Body of pancreas (tissue), 4 donors: ENCODE measurements at regions of chr17 and their contacts with region 1.

Region 1: DNA sequence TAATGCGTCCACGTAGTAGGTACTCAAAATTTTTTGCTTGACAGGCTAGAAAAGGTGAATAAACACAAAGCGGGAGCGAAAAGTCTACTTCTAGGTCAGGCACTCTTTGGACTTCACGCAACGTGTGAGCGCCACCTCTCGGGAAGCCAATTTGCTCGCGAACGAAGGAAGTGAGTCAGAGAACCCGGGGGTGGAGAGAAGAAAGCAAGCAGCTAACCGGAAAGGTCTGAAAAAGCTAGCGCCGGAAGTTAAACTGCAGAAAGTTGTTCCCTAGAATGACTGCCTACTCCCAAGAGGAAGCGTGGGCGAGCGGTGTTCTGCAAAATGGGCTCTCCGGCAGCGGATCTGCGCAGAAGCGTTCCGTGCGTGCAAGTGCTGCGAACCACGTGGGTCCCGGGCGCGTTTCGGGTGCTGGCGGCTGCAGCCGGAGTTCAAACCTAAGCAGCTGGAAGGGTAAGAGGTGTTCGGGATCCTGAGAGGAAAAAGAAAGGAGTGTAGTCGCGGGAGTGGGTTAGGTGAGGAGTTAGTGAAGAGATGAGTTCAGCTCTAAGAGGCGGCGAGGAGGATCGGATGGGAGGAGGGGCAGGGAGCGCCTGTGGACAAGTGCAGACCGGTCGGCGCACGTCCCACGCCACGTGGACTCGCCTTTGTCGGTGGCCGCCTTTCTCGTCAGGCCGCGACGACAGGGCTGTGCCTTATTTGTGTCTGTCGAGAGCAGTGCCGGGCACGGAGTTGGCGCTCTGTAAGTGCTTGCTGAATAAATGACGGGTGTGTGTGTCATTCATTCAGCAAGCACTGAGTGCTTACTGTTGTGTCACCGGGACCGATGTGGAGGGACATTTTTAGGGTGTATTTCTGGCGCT is at the start of gene NME1:
- DNase-seq: peak; percentile 96 to 98 (median 98)
- ATAC-seq: peak; percentile 96
- H3K4me3 ChIP-seq: peak within 1 kb of the TSS; percentile 26 to 65
- H3K27ac ChIP-seq: peak within 1 kb of the TSS; percentile 77 to 86 (median 82)
- H3K4me1 ChIP-seq: peaks cover 21% of the 10 kb centered on the region
- H3K27me3 ChIP-seq: no peaks in the 10 kb centered on the region
- CTCF ChIP-seq: peak; percentile 71 to 98 (median 96)
- POLR2A ChIP-seq: peak in 2 of 3 donors; percentile 76 to 83
- total RNA-seq, gene NME1: 17.5 to 27.2 TPM

Region 2: GRCh38 chr17:51000835-51001638 is 152.4 kb before region 1 on chr17:
- intact Hi-C with region 1: loop called (anchors 10 kb)
- DNase-seq: peak in 1 of 4 donors; percentile 36
- ATAC-seq: peak; percentile 70
- H3K4me3 ChIP-seq: no peak overlapping the region
- H3K27ac ChIP-seq: peak overlapping the region in 1 of 4 donors; percentile 11
- H3K4me1 ChIP-seq: no peaks in the 10 kb centered on the region
- H3K27me3 ChIP-seq: no peaks in the 10 kb centered on the region
- CTCF ChIP-seq: peak; percentile 10 to 74 (median 60)
- POLR2A ChIP-seq: no peak

Region 3: DNA sequence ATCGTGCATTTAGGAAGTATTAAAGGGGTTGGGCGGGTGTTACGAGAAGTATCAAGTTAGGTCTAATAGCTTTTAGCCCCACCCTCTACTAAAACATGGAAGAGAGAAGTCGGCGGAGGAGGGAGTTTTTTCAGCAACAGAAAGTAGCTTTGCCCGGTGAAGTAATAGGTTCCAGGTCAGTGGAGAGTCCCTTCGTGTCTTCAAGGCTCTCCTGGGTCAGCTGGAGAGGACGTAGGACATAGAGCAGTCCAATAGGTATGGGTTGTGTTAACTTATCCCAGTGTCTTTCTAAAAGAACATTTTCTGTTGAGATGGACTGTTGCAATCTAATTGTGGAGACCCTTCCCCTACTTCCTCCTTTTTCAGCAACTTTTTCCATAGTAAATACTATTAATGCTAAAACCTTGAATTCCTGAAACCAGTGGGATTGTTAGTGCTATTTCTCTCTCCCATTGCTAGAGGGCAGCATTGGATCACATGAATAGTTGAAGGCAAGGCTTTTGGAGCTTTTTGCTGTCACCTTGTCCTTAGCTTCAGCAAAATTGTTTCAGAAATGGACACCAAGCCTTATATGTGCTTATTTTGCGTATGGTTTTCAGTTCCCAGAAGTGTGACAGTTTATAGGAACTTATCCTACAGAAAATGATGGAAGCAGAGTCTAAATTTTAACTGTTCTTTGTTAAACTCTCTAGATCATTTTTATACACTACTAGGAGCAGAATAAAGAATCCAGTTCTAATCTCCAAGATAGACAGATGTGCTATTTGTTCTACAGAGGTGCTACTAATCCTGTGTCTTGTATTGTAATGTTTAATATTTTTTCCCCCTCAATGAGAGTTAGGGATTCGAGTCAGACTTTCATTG is 145.3 kb after region 1 on chr17:
- intact Hi-C with region 1: no loop called
- DNase-seq: peak in 3 of 4 donors; percentile 11 to 22 (median 14)
- ATAC-seq: peak; percentile 42
- H3K4me3 ChIP-seq: no peak overlapping the region
- H3K27ac ChIP-seq: peak overlapping the region in 1 of 4 donors; percentile 52
- H3K4me1 ChIP-seq: peaks cover 15% of the 10 kb centered on the region
- H3K27me3 ChIP-seq: no peaks in the 10 kb centered on the region
- CTCF ChIP-seq: peak; percentile 43 to 74 (median 70)
- POLR2A ChIP-seq: no peak